ENCODE measurements at regions of chr19 and their contacts with region 1.

Region 1: DNA sequence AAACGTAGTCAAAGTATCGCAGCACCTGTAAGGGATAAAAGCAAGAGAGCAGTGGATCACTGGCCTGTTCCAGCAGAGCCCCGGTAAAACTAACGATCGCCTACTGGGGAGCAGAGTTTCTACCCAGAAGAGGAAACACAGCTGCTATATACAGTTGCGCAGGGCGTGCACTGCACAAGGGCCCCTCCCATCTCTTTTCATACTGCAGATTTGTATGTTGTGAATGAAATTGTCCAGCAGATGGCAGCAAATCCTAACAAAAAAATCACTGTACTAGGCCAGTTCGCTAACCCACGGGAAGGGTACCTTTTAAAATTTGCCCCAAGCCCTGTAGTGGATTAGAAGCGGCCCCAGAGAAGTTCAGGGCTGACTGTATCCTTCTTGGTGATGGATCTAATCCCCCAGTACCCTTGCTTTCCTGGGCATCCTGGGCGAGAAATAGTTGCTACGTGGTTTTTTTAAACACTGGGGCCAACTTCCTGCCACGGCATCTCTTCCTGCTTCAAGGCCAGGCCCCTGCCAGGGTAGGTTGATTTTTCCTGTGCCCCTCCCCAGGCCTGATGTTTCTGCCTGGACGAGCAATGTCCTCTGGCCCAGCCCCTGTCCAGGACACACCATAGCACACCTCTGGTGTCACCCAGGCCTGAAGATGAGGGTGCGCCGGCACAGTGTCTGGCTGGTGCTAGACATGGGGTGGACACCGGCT is 127.0 kb downstream of the IER2 start:
- DNase-seq: peak; percentile 23 to 84 (median 79)
- ATAC-seq: peak; percentile 93
- H3K4me3 ChIP-seq: peak overlapping the region; percentile 41
- H3K4me3 Mint-ChIP-seq: peak overlapping the region; percentile 39 to 75 (median 64)
- H3K27ac ChIP-seq: peak overlapping the region; percentile 60
- H3K27ac Mint-ChIP-seq: peak overlapping the region; percentile 47 to 91 (median 84)
- H3K4me1 ChIP-seq: peaks cover 7% of the 10 kb centered on the region in 2 donors
- H3K4me1 Mint-ChIP-seq: peaks cover 8 to 33% (median 18%) of the 10 kb centered on the region in 7 donors
- H3K27me3 ChIP-seq: no peaks in the 10 kb centered on the region
- H3K27me3 Mint-ChIP-seq: peaks cover 0 to 10% (median 5%) of the 10 kb centered on the region in 5 donors

Region 2: DNA sequence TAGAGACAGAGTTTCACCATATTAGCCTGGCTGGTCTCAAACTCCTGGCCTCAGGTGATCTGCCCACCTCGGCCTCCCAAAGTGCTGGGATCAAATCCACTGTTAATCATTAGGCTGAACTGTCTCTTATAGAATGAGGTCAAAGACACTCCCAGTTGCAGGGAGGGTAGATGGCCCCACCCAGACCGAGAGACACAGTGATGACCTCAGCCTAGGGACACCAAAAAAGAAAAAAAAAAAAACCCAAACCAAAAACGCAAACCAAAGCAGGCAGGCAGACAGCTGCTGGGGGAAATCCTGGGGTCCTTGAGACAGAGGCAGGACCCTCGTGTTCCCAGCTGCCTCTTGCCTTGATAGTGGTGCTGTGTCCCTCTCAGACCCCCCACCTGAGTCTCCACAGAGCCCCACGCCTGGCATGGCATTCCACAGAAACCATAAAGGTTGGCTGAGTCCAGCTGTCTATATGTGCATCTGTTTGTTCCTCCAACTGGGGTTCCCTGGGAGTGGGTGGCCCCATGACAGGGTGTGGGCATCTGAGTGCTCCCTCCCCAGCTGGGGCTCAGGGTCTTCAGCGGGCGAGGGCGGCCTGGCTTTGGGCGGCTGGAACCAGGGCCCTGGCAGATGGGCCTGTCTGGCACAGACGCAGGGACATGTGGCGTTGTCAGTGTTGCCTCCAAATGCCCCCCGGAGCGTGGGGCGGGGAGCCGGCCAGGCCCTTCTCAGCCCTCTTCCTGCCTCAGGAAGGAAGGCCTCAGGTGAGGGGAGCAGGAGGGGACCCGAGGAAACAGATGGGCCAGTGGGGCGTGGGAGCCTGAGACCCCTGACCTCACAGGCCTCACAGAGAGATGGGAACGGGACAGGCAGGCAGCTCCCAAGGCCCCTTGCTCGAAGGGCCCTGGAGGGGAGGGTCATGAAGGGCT is 302.7 kb before region 1 on chr19:
- CTCF ChIA-PET with region 1: no interaction called
- POLR2A ChIA-PET with region 1: no interaction called
- intact Hi-C with region 1: loop called in 1 of 2 experiments (anchors 5 kb)
- DNase-seq: no peak
- ATAC-seq: no peak
- H3K4me3 ChIP-seq: no peak overlapping the region
- H3K4me3 Mint-ChIP-seq: no peak overlapping the region
- H3K27ac ChIP-seq: no peak overlapping the region
- H3K27ac Mint-ChIP-seq: no peak overlapping the region
- H3K4me1 ChIP-seq: peaks cover 0 to 3% of the 10 kb centered on the region in 2 donors
- H3K4me1 Mint-ChIP-seq: peaks cover 2 to 7% (median 5%) of the 10 kb centered on the region in 7 donors
- H3K27me3 ChIP-seq: no peaks in the 10 kb centered on the region
- H3K27me3 Mint-ChIP-seq: peaks cover 7 to 17% (median 16%) of the 10 kb centered on the region in 5 donors

Region 3: DNA sequence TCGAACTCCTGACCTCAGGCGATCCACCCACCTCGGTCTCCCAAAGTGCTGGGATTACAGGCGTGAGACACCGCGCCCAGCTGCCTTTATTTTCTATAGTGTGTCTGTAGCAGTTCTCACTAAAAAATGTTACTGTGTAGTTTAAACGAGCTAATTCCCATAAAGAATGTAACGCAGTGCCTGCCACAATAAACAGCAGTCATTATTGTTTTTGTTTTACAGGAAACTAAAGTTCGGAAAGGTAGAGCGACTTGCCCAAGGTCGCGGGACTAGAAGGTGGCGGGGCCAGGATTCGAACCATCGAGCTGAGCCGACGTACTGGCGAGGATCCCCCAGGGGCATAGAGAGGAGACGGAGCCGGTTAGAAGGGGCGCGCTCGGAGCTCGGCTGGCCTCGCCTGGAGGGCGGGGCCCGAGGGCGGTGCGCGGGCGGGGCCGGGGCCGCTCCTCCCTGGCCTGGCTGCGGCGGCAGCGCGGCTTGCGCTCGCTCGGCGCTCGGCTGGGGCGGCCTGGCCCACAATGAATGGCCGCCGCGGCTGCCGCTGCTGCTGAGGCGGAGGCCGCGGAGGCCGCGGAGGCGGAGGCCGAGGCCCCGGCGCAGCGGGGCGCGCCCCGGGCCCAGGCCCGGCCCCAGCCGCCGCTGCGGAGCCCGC is 159.4 kb before region 1 on chr19 and contains the start of gene NACC1:
- CTCF ChIA-PET with region 1: no interaction called
- POLR2A ChIA-PET with region 1: no interaction called
- intact Hi-C with region 1: no loop called
- DNase-seq: peak; percentile 81 to 94 (median 89)
- ATAC-seq: peak; percentile 95
- H3K4me3 ChIP-seq: peak within 1 kb of the TSS; percentile 97
- H3K4me3 Mint-ChIP-seq: peak within 1 kb of the TSS; percentile 86 to 99 (median 97)
- H3K27ac ChIP-seq: peak within 1 kb of the TSS; percentile 84
- H3K27ac Mint-ChIP-seq: peak within 1 kb of the TSS; percentile 85 to 96 (median 91)
- H3K4me1 ChIP-seq: peaks cover 25 to 30% of the 10 kb centered on the region in 2 donors
- H3K4me1 Mint-ChIP-seq: peaks cover 16 to 64% (median 49%) of the 10 kb centered on the region in 7 donors
- H3K27me3 ChIP-seq: no peaks in the 10 kb centered on the region
- H3K27me3 Mint-ChIP-seq: no peaks in the 10 kb centered on the region
- total RNA-seq, gene NACC1: 18.0 to 72.7 (median 22.4) TPM

Region 4: DNA sequence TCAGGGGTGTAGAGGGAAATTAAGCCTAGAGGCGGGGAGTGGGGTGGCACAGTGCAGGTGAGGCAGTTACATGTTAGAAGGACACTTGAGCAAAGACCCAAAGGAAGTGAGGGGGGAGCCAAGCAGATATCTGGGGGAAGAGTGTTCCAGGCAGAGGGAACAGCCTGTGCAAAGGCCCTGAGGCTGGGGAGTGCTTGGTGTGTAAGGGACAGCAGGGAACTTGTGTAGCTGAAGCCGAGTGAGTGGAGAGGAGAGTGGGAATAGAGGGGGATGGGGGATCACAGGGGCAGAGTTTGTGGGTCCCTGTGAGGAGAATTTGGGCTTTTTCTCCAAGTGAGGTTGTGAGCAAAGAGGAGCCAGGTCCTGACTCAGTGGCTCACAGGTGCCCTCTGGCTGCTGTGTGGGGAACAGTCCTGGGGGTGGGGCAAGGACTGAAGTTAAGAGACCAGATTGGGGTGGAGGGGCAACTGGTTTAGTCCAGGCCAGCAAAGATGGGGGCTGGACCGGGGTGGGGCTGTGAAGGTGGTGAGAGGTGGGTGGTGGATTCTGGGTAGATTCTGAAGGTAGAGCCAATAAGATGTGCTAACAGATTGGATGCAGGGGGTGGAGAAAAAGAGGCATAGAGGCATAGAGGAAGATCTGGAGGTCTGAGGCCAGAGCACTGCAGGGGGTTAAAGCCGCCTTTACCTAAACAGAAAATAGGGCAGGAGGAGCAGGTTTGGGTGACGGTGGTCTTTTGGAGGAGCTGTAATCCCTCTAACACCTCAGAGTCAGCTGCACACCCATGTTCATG is 153.7 kb after region 1 on chr19:
- CTCF ChIA-PET with region 1: interaction called, 6 read pairs
- POLR2A ChIA-PET with region 1: no interaction called
- intact Hi-C with region 1: loop called (anchors 1 kb)
- DNase-seq: peak; percentile 5 to 39 (median 26)
- ATAC-seq: peak; percentile 57
- H3K4me3 ChIP-seq: no peak overlapping the region
- H3K4me3 Mint-ChIP-seq: no peak overlapping the region
- H3K27ac ChIP-seq: no peak overlapping the region
- H3K27ac Mint-ChIP-seq: peak overlapping the region in 1 of 9 donors; percentile 80
- H3K4me1 ChIP-seq: no peaks in the 10 kb centered on the region
- H3K4me1 Mint-ChIP-seq: no peaks in the 10 kb centered on the region
- H3K27me3 ChIP-seq: peaks cover 0 to 4% of the 10 kb centered on the region in 2 donors
- H3K27me3 Mint-ChIP-seq: peaks cover 0 to 31% (median 26%) of the 10 kb centered on the region in 5 donors

Region 5: DNA sequence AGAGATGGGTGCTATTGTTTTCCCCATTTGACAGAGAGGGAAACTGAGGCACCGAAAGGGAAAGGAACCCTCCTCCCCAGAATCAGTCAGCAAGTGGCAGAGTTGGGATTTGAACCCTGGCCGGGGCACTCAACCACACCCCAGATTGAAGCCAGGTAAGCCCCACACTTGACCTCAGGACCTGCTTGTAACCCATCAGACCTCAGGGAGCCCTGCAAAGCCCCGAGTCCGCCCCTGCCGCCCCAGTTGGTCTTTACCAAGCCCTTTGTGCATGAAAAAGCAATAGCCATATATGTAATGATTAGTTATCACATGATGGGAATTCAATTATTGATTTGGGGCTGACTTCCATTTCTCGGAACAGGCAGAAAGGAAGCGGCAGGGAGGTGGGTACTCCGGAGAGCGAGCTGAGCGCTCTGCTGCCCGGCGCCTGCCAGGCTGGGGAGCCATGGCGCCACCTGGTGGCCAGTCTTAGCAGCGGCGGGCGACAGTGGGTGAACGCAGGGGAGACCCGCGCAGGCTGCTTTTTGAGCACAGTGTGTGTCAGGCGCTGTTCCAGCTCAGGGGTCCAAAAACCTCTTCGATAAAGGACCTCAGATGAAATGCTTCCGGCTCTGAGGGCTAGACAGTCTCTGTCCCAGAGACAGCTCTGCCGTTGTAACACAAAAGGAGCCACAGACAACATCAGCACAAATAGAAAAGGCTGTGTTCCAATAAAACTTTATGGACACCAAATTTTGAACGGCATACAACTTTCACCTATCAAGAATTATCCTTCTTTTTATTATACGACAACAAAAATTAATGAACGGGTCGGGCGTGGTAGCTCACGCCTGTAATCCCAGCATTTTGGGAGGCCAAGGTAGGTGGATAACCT is 311.9 kb after region 1 on chr19:
- CTCF ChIA-PET with region 1: interaction called, 44 read pairs
- POLR2A ChIA-PET with region 1: interaction called, 10 read pairs
- intact Hi-C with region 1: loop called (anchors 1 kb)
- DNase-seq: peak; percentile 59 to 91 (median 82)
- ATAC-seq: peak; percentile 98
- H3K4me3 ChIP-seq: no peak overlapping the region
- H3K4me3 Mint-ChIP-seq: peak overlapping the region in 2 of 10 donors; percentile 26 to 27
- H3K27ac ChIP-seq: no peak overlapping the region
- H3K27ac Mint-ChIP-seq: no peak overlapping the region
- H3K4me1 ChIP-seq: peaks cover 0 to 4% of the 10 kb centered on the region in 2 donors
- H3K4me1 Mint-ChIP-seq: peaks cover 0 to 2% (median 0%) of the 10 kb centered on the region in 7 donors
- H3K27me3 ChIP-seq: peaks cover 0 to 4% of the 10 kb centered on the region in 2 donors
- H3K27me3 Mint-ChIP-seq: peaks cover 0 to 18% (median 10%) of the 10 kb centered on the region in 5 donors

Region 6: DNA sequence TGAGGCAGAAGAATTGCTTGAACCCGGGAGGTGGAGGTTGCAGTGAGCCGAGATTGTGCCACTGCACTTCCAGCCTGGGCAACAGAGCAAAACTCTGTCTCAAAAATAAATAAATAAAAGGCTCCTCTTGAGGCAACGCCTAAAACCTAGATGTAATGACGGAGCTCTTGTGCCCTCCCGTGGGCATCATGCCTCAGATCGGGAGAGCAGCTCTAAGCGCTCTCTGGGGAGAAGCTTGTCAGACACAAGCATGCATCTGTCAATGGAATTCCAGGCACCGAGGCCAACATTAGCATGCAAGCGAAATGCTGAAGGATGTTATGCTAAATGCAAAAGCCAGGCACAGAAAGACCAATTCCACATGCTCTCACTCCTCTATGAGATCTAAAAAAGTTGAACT is 441.5 kb after region 1 on chr19:
- CTCF ChIA-PET with region 1: no interaction called
- POLR2A ChIA-PET with region 1: no interaction called
- intact Hi-C with region 1: loop called in 1 of 2 experiments (anchors 1 kb)
- DNase-seq: no peak
- ATAC-seq: no peak
- H3K4me3 ChIP-seq: no peak overlapping the region
- H3K4me3 Mint-ChIP-seq: no peak overlapping the region
- H3K27ac ChIP-seq: no peak overlapping the region
- H3K27ac Mint-ChIP-seq: no peak overlapping the region
- H3K4me1 ChIP-seq: no peaks in the 10 kb centered on the region
- H3K4me1 Mint-ChIP-seq: no peaks in the 10 kb centered on the region
- H3K27me3 ChIP-seq: no peaks in the 10 kb centered on the region
- H3K27me3 Mint-ChIP-seq: peaks cover 4 to 16% (median 13%) of the 10 kb centered on the region in 5 donors

Measured in naive thymus-derived CD4-positive, alpha-beta T cell (primary cell).